Activated CD4-positive, alpha-beta memory T cell treated with anti-CD3 and anti-CD28 coated beads, Interleukin-2, amount 10 ng/mL, durations not matched to agents 7 days and 5 days (primary cell): ENCODE measurements at regions of chr17 and their contacts with region 1.

Region 1: GRCh38 chr17:58006924-58007780 is at the start of gene SRSF1:
- DNase-seq: peak; percentile 98
- H3K4me3 Mint-ChIP-seq: peak within 1 kb of the TSS; percentile 99
- H3K27ac Mint-ChIP-seq: peak within 1 kb of the TSS; percentile 99
- H3K4me1 Mint-ChIP-seq: peaks cover 57% of the 10 kb centered on the region
- H3K27me3 Mint-ChIP-seq: no peaks in the 10 kb centered on the region
- total RNA-seq, gene SRSF1: 298 to 304 TPM

Region 2: DNA sequence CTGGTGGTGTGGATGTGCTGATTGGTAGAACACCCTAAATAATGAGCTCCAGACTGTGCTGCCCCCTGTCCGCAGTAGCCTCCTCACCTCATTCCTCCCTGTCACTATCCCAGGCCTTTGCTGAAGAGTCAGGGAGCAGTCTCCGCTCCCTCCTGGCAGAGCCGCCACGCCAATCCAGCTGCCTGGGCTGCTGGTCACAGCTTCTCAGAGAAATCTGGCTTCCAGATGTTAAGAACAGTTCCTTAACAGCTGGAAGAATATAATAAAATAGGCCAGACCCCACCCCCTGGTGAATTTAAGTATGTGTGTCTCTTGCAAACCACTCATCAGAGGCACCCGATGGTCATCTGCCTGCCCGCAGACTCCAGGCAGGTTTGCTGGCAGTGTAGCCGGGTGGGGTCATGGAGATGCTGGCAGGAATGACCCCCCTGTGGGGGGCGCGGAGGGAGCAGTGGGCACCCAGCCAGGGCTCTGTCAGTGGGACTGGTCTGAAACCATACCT is 423.1 kb before region 1 on chr17:
- CTCF ChIA-PET with region 1: no interaction called
- POLR2A ChIA-PET with region 1: no interaction called
- DNase-seq: no peak
- H3K4me3 Mint-ChIP-seq: no peak overlapping the region
- H3K27ac Mint-ChIP-seq: no peak overlapping the region
- H3K4me1 Mint-ChIP-seq: no peaks in the 10 kb centered on the region
- H3K27me3 Mint-ChIP-seq: no peaks in the 10 kb centered on the region

Region 3: DNA sequence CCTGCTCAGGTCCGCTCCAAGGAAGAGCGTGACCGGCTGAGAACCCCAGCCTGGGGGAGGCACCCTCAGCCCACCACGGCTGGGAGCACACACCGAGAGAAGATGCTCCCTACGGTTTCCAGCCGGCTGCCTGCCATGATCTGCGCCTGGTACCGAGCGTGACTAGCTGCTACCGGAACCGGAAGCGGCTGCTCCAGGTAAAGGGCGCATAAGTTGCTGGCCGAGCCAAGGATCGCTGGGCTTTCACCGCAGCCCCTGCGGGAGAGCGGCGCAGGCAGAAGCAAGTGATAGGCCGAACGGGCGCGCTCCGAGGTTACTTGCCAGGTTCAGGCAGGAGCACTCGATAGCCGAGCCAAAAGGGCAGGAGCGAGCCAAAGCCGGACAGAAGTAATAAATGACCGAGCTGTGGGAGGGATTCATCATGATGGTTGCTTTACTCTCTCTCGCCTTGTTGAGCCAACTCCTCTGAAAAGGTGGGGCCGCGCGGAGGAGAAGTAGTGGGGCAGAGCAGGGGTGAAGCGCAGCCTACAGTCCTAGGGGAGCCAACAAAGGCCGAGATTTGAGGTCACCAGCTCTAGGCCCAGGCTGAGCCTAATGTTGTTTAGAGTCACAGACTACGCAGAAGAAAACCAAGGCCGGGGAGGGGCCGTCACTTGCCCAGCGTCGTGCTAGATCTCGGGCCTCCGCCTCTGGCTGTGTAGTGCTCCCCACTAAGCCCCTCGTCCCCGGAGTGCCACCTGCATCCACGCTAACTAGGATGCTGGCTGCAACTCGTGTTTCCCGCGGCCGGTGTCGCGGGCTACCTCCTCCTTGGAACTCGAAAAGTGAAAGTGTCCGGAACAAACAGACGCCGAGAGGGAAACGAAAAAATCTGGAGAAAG is 157.0 kb before region 1 on chr17 and contains the start of gene MRPS23:
- CTCF ChIA-PET with region 1: interaction called, 137 read pairs
- POLR2A ChIA-PET with region 1: interaction called, 41 read pairs
- DNase-seq: peak; percentile 98
- H3K4me3 Mint-ChIP-seq: peak within 1 kb of the TSS; percentile 95
- H3K27ac Mint-ChIP-seq: peak within 1 kb of the TSS; percentile 98
- H3K4me1 Mint-ChIP-seq: peaks cover 43% of the 10 kb centered on the region
- H3K27me3 Mint-ChIP-seq: no peaks in the 10 kb centered on the region
- total RNA-seq, gene MRPS23: 30.8 to 35.3 TPM

Region 4: DNA sequence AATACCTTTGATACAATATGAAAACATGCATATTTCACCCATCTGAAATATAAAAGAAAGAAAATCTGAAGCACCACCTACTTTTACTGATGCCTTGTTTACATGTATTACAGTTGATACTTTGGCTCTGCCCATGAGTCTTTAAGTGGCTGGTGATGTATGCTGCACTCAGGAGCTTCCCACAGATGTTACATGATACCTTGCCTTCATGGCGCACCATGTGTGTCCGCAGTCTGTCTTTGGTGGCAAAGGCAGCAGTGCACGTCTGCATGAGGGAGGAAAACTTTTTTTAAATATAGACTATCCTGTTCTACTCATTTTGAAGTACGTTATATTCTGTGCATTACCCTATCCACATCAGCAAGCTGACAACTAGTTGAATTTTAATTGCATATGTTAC is 26.6 kb before region 1 on chr17:
- CTCF ChIA-PET with region 1: no interaction called
- POLR2A ChIA-PET with region 1: interaction called, 40 read pairs
- DNase-seq: no peak
- H3K4me3 Mint-ChIP-seq: no peak overlapping the region
- H3K27ac Mint-ChIP-seq: no peak overlapping the region
- H3K4me1 Mint-ChIP-seq: peaks cover 41% of the 10 kb centered on the region
- H3K27me3 Mint-ChIP-seq: no peaks in the 10 kb centered on the region

Region 5: GRCh38 chr17:57995076-57995956 is 11.8 kb before region 1 on chr17:
- CTCF ChIA-PET with region 1: interaction called, 16 read pairs
- POLR2A ChIA-PET with region 1: interaction called, 86 read pairs
- DNase-seq: peak; percentile 57
- H3K4me3 Mint-ChIP-seq: no peak overlapping the region
- H3K27ac Mint-ChIP-seq: no peak overlapping the region
- H3K4me1 Mint-ChIP-seq: peaks cover 64% of the 10 kb centered on the region
- H3K27me3 Mint-ChIP-seq: no peaks in the 10 kb centered on the region

Region 6: GRCh38 chr17:58039975-58040374 is 32.8 kb after region 1 on chr17:
- CTCF ChIA-PET with region 1: no interaction called
- POLR2A ChIA-PET with region 1: no interaction called
- DNase-seq: no peak
- H3K4me3 Mint-ChIP-seq: no peak overlapping the region
- H3K27ac Mint-ChIP-seq: no peak overlapping the region
- H3K4me1 Mint-ChIP-seq: no peaks in the 10 kb centered on the region
- H3K27me3 Mint-ChIP-seq: peaks cover 45% of the 10 kb centered on the region

Region 7: GRCh38 chr17:58082870-58083490 is 75.8 kb after region 1 on chr17 and contains the start of gene DYNLL2:
- CTCF ChIA-PET with region 1: interaction called, 3 read pairs
- POLR2A ChIA-PET with region 1: interaction called, 47 read pairs
- DNase-seq: peak; percentile 92
- H3K4me3 Mint-ChIP-seq: peak within 1 kb of the TSS; percentile 88
- H3K27ac Mint-ChIP-seq: peak within 1 kb of the TSS; percentile 73
- H3K4me1 Mint-ChIP-seq: peaks cover 35% of the 10 kb centered on the region
- H3K27me3 Mint-ChIP-seq: peaks cover 24% of the 10 kb centered on the region
- total RNA-seq, gene DYNLL2: 29.4 to 29.7 TPM

Region 8: GRCh38 chr17:58172369-58173071 is 165.4 kb after region 1 on chr17:
- CTCF ChIA-PET with region 1: interaction called, 3 read pairs
- POLR2A ChIA-PET with region 1: interaction called, 10 read pairs
- DNase-seq: peak; percentile 69
- H3K4me3 Mint-ChIP-seq: no peak overlapping the region
- H3K27ac Mint-ChIP-seq: no peak overlapping the region
- H3K4me1 Mint-ChIP-seq: peaks cover 29% of the 10 kb centered on the region
- H3K27me3 Mint-ChIP-seq: peaks cover 14% of the 10 kb centered on the region